Motor neuron (in vitro differentiated cells): ENCODE measurements at regions of chr14 and their contacts with region 1.

Region 1: GRCh38 chr14:95993768-95994592 is 45.2 kb upstream of the C14orf132 start:
- ATAC-seq: peak; percentile 31 to 70 (median 54)
- H3K4me3 ChIP-seq: no peak overlapping the region
- H3K27ac ChIP-seq: no peak overlapping the region
- H3K4me1 ChIP-seq: peaks cover 4 to 6% of the 10 kb centered on the region in 2 donors

Region 2: DNA sequence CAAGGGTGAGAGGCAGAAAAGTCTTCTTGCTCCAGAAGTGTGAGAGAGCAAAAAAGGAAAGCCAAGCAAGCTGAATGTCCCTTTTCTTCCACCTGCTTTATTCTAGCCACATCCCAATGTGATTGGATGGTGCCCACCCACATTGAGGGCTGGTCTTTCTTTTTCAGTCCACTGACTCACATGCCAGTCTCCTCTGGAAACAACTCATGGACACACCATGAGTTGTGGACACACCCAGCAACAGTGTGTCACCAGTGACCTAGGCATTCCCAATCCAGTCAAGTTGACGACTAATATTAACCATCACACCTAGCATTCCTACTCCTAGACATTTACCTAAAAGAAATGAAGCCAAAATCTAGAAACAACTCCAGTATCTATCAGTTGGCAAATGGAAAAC is 829.5 kb before region 1 on chr14:
- in situ Hi-C with region 1: no loop called
- ATAC-seq: peak in 2 of 8 experiments; percentile 68 to 81
- H3K4me3 ChIP-seq: no peak overlapping the region
- H3K27ac ChIP-seq: no peak overlapping the region
- H3K4me1 ChIP-seq: no peaks in the 10 kb centered on the region

Region 3: DNA sequence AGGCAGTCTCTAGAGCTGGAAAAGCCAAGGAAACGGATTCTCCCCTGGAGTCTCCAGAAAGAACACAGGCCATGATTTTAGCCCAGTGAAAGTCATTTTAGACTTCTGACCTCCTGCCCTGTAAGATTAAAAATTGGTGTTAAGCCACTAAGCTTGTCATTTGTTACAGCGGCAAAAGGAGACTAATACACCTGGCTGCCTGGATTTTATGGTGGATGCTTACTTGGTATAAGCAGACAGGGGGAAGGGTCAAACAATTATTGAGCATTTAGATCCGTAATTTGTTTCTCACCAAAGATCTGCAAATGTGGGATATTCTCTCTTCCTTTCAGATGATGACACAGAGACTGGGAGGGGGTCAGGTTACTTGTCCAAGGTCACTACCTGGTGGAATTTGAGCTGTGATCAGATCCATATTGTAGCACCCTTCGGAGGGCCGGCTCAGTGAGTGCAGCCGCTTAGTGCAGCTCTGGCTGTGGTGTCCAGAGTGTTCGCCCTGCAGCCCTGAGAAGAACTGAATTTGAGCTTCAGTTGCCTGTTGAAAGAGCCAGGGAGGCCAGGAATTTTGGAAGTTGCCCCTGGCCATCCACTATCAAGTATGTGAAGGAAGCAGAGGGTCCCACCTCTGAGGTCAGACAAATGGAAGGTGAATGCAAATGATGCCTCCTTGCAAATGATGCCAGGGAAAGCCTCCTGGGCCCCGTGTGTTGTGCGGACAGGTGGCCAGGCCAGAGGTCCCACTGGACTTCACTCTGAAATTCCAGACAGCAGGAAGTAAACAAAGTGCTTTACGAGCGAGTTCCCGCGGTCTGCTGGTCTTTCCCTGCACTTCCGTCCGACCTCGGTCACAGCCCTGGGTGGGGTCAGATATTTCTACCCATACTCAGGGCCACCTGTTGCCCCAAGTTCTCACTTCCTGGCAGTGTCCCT is 444.1 kb before region 1 on chr14:
- in situ Hi-C with region 1: loop called in 4 of 9 experiments (anchors 10 kb)
- ATAC-seq: no peak
- H3K4me3 ChIP-seq: no peak overlapping the region
- H3K27ac ChIP-seq: no peak overlapping the region
- H3K4me1 ChIP-seq: no peaks in the 10 kb centered on the region

Region 4: GRCh38 chr14:95774265-95775160 is 219.5 kb before region 1 on chr14:
- in situ Hi-C with region 1: loop called in 1 of 9 experiments (anchors 25 kb)
- ATAC-seq: peak in 3 of 8 experiments; percentile 29 to 56 (median 31)
- H3K4me3 ChIP-seq: no peak overlapping the region
- H3K27ac ChIP-seq: no peak overlapping the region
- H3K4me1 ChIP-seq: peaks cover 6 to 12% of the 10 kb centered on the region in 2 donors